GM12878 (cell line): ENCODE measurements at regions of chr1 and their contacts with region 1.

Region 1: DNA sequence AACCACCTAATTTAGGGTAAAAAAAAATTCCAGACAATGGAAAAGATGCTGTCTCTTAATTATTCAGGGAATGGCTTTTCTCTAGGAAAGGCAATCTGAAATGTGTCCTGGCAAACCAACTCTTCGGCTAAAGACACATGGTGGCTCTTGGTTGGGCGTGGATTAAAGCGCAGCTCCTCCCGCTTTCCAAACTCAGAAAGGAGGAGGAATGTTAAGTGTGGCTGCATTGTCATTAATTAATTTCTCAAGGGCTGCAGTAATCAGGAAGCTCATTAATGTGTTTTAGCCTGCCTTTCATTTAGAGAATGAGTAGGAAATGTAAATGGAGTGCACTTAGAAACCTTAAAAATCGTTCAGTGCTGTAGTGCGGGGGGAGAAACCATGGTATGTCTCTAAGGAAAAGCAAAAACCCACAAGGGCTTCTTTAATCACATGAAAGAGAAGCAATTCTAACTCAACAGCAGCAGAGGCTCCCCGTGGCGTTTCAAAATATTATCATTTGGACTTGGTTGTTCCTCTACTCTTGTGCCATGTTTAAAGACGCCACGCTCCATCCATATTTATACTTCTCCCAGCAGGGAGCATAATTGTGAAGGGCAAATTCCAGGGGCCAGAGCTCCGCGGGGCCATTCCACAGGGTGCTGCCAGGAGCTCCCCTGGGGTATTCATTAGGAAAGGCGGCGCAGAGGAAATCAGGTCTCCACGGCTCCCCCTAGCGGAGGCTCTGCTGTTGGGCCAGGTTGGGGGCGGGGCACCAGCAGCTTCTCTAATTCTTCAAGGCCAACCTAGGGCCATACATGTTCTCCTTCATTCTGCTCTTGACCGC is 91.9 kb upstream of the SSX2IP start:
- DNase-seq: no peak
- ATAC-seq: peak; percentile 97
- H3K4me3 ChIP-seq: no peak overlapping the region
- H3K27ac ChIP-seq: no peak overlapping the region
- H3K4me1 ChIP-seq: no peaks in the 10 kb centered on the region
- H3K27me3 ChIP-seq: peaks cover 0 to 4% of the 10 kb centered on the region in 2 experiments; a peak in 1 of 4 replicates
- CTCF ChIP-seq: peak; percentile 76 to 89 (median 84)
- EP300 ChIP-seq: no peak
- POLR2A ChIP-seq: no peak
- RAD21 ChIP-seq: peak; percentile 57

Region 2: GRCh38 chr1:84330125-84330984 is 451.8 kb before region 1 on chr1:
- CTCF ChIA-PET with region 1: no interaction called
- POLR2A ChIA-PET with region 1: no interaction called
- RAD21 ChIA-PET with region 1: no interaction called
- SMC1A ChIA-PET with region 1: no interaction called
- in situ Hi-C with region 1: no loop called
- intact Hi-C with region 1: no loop called
- DNase-seq: no peak
- ATAC-seq: no peak
- H3K4me3 ChIP-seq: no peak overlapping the region
- H3K27ac ChIP-seq: no peak overlapping the region
- H3K4me1 ChIP-seq: no peaks in the 10 kb centered on the region
- H3K27me3 ChIP-seq: no peaks in the 10 kb centered on the region
- CTCF ChIP-seq: no peak
- EP300 ChIP-seq: no peak
- POLR2A ChIP-seq: no peak
- RAD21 ChIP-seq: no peak

Region 3: GRCh38 chr1:84489766-84490165 is 292.4 kb before region 1 on chr1:
- CTCF ChIA-PET with region 1: no interaction called
- POLR2A ChIA-PET with region 1: no interaction called
- RAD21 ChIA-PET with region 1: no interaction called
- SMC1A ChIA-PET with region 1: no interaction called
- in situ Hi-C with region 1: no loop called
- intact Hi-C with region 1: no loop called
- DNase-seq: no peak
- ATAC-seq: no peak
- H3K4me3 ChIP-seq: no peak overlapping the region
- H3K27ac ChIP-seq: no peak overlapping the region
- H3K4me1 ChIP-seq: no peaks in the 10 kb centered on the region; the same call in 1 of the 2 replicates
- H3K27me3 ChIP-seq: no peaks in the 10 kb centered on the region
- CTCF ChIP-seq: no peak
- EP300 ChIP-seq: no peak
- POLR2A ChIP-seq: no peak
- RAD21 ChIP-seq: no peak

Region 4: DNA sequence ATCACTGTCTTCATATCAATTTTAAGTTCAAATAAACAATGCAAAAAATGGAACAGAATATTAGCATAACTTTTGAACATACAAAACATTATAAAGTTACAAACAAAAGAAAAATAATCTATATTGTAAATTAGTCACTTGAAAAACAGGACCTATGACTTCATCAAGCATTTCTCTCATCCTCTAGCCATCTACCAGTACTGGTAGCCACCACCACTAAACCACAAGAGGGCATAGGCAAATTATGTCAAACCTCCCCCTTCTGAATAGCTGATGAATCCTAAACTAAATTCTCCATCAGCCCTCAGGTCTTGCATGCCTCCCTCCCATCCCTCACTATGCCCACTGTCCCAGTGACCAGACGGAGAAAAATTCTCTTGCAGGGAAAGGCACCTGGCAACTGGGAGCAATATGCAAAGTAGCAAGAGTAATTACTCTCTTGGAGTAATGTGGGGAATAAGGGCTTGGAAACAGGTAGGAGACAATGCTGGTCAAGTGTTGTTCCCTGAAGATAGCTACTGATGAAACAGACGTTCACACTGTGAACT is 129.0 kb before region 1 on chr1:
- CTCF ChIA-PET with region 1: no interaction called
- POLR2A ChIA-PET with region 1: no interaction called
- RAD21 ChIA-PET with region 1: no interaction called
- SMC1A ChIA-PET with region 1: no interaction called
- in situ Hi-C with region 1: no loop called
- intact Hi-C with region 1: no loop called
- DNase-seq: no peak
- ATAC-seq: 0 out of 3 replicates have a peak, but pooled peaks have one; percentile 39
- H3K4me3 ChIP-seq: no peak overlapping the region
- H3K27ac ChIP-seq: no peak overlapping the region
- H3K4me1 ChIP-seq: no peaks in the 10 kb centered on the region
- H3K27me3 ChIP-seq: no peaks in the 10 kb centered on the region
- CTCF ChIP-seq: no peak
- EP300 ChIP-seq: no peak
- POLR2A ChIP-seq: no peak
- RAD21 ChIP-seq: no peak

Region 5: GRCh38 chr1:84758968-84759491 is 23.1 kb before region 1 on chr1:
- CTCF ChIA-PET with region 1: interaction called, 20 read pairs
- POLR2A ChIA-PET with region 1: no interaction called
- RAD21 ChIA-PET with region 1: interaction called, 4 read pairs
- SMC1A ChIA-PET with region 1: interaction called, 3 read pairs
- in situ Hi-C with region 1: no loop called
- intact Hi-C with region 1: no loop called
- DNase-seq: no peak
- ATAC-seq: peak; percentile 54
- H3K4me3 ChIP-seq: no peak overlapping the region
- H3K27ac ChIP-seq: no peak overlapping the region
- H3K4me1 ChIP-seq: no peaks in the 10 kb centered on the region
- H3K27me3 ChIP-seq: peaks cover 0 to 2% of the 10 kb centered on the region in 2 experiments; a peak in 1 of 4 replicates
- CTCF ChIP-seq: no peak
- EP300 ChIP-seq: no peak
- POLR2A ChIP-seq: no peak
- RAD21 ChIP-seq: no peak

Region 6: DNA sequence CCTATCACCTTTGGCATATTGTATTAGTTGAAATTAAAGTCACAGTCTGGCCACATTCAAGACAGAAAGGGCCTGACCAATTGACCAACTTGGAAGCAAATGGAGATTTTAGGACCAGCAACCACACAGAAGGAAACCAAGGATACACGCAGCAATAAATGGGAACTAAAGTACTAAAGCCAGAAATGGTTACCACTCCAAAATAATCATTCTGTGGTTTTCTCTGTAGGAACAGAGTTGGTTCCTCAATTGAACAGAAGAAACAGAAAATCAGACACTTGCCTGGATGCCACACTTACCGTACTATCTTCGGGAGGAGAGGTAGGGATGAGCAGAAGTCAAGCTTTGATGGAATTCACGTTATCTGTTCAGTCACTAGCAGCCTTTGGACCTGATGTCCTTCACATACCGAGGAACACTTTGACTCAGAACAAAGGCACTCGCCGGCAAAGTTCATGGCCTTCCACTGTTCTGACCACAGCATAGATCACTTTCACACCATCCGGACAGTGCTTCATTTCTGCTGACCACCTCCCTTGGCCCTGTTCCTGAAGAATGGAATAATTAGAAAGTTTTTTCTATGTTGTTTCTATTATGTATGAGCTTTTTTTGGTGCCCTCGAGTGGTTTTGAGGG is 13.9 kb after region 1 on chr1:
- CTCF ChIA-PET with region 1: interaction called, 24 read pairs
- POLR2A ChIA-PET with region 1: interaction called, 3 read pairs
- RAD21 ChIA-PET with region 1: no interaction called
- SMC1A ChIA-PET with region 1: interaction called, 4 read pairs
- in situ Hi-C with region 1: no loop called
- intact Hi-C with region 1: no loop called
- DNase-seq: no peak
- ATAC-seq: no peak
- H3K4me3 ChIP-seq: no peak overlapping the region
- H3K27ac ChIP-seq: no peak overlapping the region
- H3K4me1 ChIP-seq: no peaks in the 10 kb centered on the region
- H3K27me3 ChIP-seq: no peaks in the 10 kb centered on the region
- CTCF ChIP-seq: no peak
- EP300 ChIP-seq: no peak
- POLR2A ChIP-seq: no peak
- RAD21 ChIP-seq: no peak

Region 7: GRCh38 chr1:84862810-84863251 is 80.7 kb after region 1 on chr1:
- CTCF ChIA-PET with region 1: interaction called, 17 read pairs
- POLR2A ChIA-PET with region 1: no interaction called
- RAD21 ChIA-PET with region 1: interaction called, 4 read pairs
- SMC1A ChIA-PET with region 1: interaction called, 5 read pairs
- in situ Hi-C with region 1: no loop called
- intact Hi-C with region 1: no loop called
- DNase-seq: peak; percentile 80
- ATAC-seq: peak; percentile 92
- H3K4me3 ChIP-seq: 0 out of 2 replicates have a peak overlapping the region, but pooled peaks have one; percentile 6
- H3K27ac ChIP-seq: no peak overlapping the region
- H3K4me1 ChIP-seq: peaks cover 30% of the 10 kb centered on the region
- H3K27me3 ChIP-seq: no peaks in the 10 kb centered on the region
- CTCF ChIP-seq: no peak
- EP300 ChIP-seq: peak in 1 of 2 experiments; percentile 65; a peak in 2 of 4 replicates
- POLR2A ChIP-seq: no peak
- RAD21 ChIP-seq: peak; percentile 15; the same call in 1 of the 2 replicates

Region 8: DNA sequence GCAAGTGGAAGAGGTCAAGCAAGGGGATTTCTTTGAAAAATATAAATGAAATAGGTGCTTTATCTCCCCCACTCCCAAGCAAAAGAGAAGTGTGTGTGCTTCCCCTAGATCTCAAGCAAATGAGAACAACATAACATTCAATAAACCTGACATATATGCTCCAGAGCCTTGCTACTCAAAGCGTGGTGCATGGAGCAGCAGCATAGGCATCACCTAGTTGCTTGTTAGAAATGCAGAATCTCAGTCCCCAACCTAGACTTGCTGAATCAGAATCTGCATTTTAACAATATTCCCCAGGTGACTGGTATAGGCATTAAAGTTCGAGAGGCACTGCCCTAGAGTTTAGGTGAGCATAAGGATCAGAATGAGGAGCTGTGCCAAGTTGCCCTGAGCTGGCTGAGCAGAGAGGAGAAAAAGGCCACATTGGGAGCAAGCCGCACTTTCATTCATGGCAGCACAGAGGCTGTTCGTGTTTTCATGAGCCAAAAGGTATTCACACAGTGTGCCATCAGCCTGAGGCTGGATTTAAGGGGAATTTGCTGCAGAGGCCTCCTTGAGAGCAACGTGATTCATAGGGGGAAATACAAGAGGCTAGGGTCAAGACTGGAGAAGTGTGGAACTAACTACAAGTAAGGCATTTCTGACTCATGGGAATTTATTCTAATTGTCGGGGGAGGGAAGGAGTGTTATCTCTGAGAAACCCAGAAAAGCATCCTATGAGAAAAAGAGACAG is 125.1 kb after region 1 on chr1:
- CTCF ChIA-PET with region 1: interaction called, 11 read pairs
- POLR2A ChIA-PET with region 1: no interaction called
- RAD21 ChIA-PET with region 1: no interaction called
- SMC1A ChIA-PET with region 1: no interaction called
- in situ Hi-C with region 1: no loop called
- intact Hi-C with region 1: no loop called
- DNase-seq: no peak
- ATAC-seq: no peak
- H3K4me3 ChIP-seq: no peak overlapping the region
- H3K27ac ChIP-seq: no peak overlapping the region
- H3K4me1 ChIP-seq: no peaks in the 10 kb centered on the region
- H3K27me3 ChIP-seq: no peaks in the 10 kb centered on the region
- CTCF ChIP-seq: no peak
- EP300 ChIP-seq: no peak
- POLR2A ChIP-seq: no peak
- RAD21 ChIP-seq: no peak

Region 9: DNA sequence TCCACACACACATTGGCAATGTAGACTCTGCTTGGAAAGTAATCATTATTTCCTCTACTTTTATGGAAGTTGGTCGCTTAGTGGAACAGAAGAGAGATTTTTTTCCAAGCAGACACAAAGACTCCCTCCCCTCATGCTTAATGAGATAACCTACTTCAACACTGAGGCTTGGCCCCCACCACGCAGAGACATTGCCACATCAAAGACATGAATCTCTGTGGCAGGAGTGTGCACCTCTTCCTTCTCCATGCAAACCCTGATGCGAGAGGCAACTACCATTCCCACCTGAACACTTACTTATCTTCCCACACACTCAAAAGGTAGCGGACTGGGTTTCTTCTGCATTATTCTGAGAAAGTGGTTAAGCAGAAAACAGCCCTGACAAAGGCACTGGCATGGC is 148.2 kb after region 1 on chr1:
- CTCF ChIA-PET with region 1: interaction called, 20 read pairs
- POLR2A ChIA-PET with region 1: no interaction called
- RAD21 ChIA-PET with region 1: interaction called, 13 read pairs
- SMC1A ChIA-PET with region 1: interaction called, 13 read pairs
- in situ Hi-C with region 1: no loop called
- intact Hi-C with region 1: loop called (anchors 2 kb)
- DNase-seq: no peak
- ATAC-seq: no peak
- H3K4me3 ChIP-seq: no peak overlapping the region
- H3K27ac ChIP-seq: no peak overlapping the region
- H3K4me1 ChIP-seq: no peaks in the 10 kb centered on the region
- H3K27me3 ChIP-seq: no peaks in the 10 kb centered on the region
- CTCF ChIP-seq: no peak
- EP300 ChIP-seq: no peak
- POLR2A ChIP-seq: no peak
- RAD21 ChIP-seq: no peak

Region 10: DNA sequence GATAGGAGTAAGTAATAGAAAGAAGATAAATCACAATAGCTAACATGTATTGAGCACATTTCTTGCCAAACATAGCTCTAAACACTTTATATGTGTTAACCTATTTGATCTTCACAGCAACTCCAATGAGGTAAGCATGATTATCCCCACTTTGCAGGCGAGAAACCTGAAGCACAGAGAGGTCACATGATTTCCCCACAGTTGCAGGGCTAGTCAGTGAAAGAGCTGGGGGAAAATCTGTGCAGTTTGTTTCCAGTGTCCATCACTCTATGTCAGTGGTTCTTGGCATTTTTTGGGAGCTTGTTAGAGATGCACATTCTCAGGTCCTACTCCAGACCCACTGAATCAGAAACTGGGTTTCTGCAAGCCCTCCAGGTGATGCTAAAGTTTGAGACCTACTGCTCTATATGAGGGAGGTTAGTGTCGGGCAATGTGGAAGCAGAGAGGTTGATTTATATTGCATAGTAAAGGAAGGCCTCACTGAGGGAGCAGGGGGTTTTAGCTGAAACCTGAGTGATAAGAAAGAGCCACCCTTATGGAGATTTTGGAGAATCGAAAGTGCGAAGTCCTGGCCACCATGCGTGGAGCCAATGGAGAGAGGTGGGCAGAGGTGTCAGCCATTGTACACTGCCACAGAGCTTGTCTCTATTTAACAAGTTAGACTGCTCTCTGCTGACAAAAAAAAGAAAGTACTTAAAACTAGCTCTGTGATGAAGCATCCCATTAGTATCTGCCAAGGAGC is 245.3 kb after region 1 on chr1:
- CTCF ChIA-PET with region 1: interaction called, 8 read pairs
- POLR2A ChIA-PET with region 1: no interaction called
- RAD21 ChIA-PET with region 1: interaction called, 3 read pairs
- SMC1A ChIA-PET with region 1: no interaction called
- in situ Hi-C with region 1: no loop called
- intact Hi-C with region 1: loop called (anchors 10 kb)
- DNase-seq: no peak
- ATAC-seq: peak; percentile 96
- H3K4me3 ChIP-seq: no peak overlapping the region
- H3K27ac ChIP-seq: no peak overlapping the region
- H3K4me1 ChIP-seq: no peaks in the 10 kb centered on the region
- H3K27me3 ChIP-seq: no peaks in the 10 kb centered on the region
- CTCF ChIP-seq: peak; percentile 31 to 62 (median 33); a peak in 4 of 6 replicates
- EP300 ChIP-seq: no peak
- POLR2A ChIP-seq: no peak
- RAD21 ChIP-seq: peak; percentile 72